ENCODE measurements at regions of chr11 and their contacts with region 1.

Region 1: GRCh38 chr11:62705880-62706849 is 1.1 kb downstream of the BSCL2 start:
- DNase-seq: peak; percentile 95
- ATAC-seq: peak; percentile 67
- H3K4me3 Mint-ChIP-seq: peak overlapping the region; percentile 90
- H3K27ac Mint-ChIP-seq: peak overlapping the region; percentile 83
- H3K4me1 Mint-ChIP-seq: peaks cover 49% of the 10 kb centered on the region
- H3K27me3 Mint-ChIP-seq: no peaks in the 10 kb centered on the region

Region 2: DNA sequence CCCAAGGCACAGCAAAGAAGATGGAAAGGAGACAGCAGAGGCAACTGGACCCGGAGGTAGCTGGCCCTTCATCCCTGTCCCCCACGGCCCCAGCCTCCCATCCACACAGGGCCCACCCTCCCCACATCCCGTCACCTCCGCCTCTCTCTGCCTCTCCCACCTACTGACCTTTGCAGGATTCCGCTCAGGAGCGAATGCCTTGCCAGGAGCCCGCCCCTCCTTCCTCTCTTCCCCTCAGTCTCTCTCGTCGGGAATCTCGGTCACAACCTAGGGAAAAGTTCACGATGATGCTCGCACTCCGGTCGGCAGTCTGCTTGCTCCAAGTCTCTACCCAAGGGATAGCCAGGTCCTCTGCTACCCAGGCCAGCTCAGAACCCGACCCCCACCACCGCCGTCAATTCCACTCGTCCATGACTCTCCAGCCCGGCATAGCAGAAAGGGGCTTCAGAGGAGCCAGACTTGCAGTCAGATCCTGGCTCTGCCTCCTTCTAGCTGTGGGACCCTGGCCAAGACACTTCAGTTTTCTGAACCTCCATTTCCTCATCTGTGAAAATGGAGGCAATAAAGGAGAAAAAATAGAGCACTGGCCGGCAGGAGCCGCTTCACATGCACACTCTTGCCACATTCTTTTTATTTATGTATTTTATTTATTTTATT is 169.7 kb before region 1 on chr11:
- CTCF ChIA-PET with region 1: no interaction called
- POLR2A ChIA-PET with region 1: no interaction called
- DNase-seq: no peak
- ATAC-seq: no peak
- H3K4me3 Mint-ChIP-seq: no peak overlapping the region
- H3K27ac Mint-ChIP-seq: no peak overlapping the region
- H3K4me1 Mint-ChIP-seq: peaks cover 35% of the 10 kb centered on the region
- H3K27me3 Mint-ChIP-seq: no peaks in the 10 kb centered on the region

Region 3: DNA sequence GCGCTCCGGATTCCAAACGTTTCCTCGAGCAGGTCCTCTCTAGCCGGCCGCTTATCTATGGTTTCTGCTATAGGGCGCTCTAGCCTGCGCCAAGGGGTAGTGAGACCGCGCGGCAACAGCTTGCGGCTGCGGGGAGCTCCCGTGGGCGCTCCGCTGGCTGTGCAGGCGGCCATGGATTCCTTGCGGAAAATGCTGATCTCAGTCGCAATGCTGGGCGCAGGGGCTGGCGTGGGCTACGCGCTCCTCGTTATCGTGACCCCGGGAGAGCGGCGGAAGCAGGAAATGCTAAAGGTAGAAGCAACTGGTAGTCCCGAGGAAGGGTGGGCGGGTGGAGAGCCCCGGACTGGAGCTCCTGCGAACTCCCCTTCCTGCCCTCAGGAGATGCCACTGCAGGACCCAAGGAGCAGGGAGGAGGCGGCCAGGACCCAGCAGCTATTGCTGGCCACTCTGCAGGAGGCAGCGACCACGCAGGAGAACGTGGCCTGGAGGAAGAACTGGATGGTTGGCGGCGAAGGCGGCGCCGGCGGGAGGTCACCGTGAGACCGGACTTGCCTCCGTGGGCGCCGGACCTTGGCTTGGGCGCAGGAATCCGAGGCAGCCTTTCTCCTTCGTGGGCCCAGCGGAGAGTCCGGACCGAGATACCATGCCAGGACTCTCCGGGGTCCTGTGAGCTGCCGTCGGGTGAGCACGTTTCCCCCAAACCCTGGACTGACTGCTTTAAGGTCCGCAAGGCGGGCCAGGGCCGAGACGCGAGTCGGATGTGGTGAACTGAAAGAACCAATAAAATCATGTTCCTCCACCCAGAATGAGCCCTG is 34.4 kb before region 1 on chr11 and contains the starts of genes LBHD1 and UQCC3:
- CTCF ChIA-PET with region 1: interaction called, 3 read pairs
- POLR2A ChIA-PET with region 1: interaction called, 21 read pairs
- DNase-seq: peak; percentile 81
- ATAC-seq: peak; percentile 85
- H3K4me3 Mint-ChIP-seq: peak within 1 kb of the TSS; percentile 99
- H3K27ac Mint-ChIP-seq: peak within 1 kb of the TSS; percentile 99
- H3K4me1 Mint-ChIP-seq: peaks cover 67% of the 10 kb centered on the region
- H3K27me3 Mint-ChIP-seq: no peaks in the 10 kb centered on the region
- total RNA-seq, gene LBHD1: 22.3 to 25.0 TPM
- total RNA-seq, gene UQCC3: 7.5 TPM

Region 4: GRCh38 chr11:62678770-62679696 is 27.1 kb before region 1 on chr11 and contains the start of gene UBXN1:
- CTCF ChIA-PET with region 1: interaction called, 18 read pairs
- POLR2A ChIA-PET with region 1: interaction called, 6 read pairs
- DNase-seq: peak; percentile 89
- ATAC-seq: peak; percentile 88
- H3K4me3 Mint-ChIP-seq: peak within 1 kb of the TSS; percentile 92
- H3K27ac Mint-ChIP-seq: peak within 1 kb of the TSS; percentile 87
- H3K4me1 Mint-ChIP-seq: peaks cover 42% of the 10 kb centered on the region
- H3K27me3 Mint-ChIP-seq: no peaks in the 10 kb centered on the region
- total RNA-seq, gene UBXN1: 107 to 118 TPM